Naive thymus-derived CD8-positive, alpha-beta T cell (primary cell): ENCODE measurements at regions of chr17 and their contacts with region 1.

Region 1: DNA sequence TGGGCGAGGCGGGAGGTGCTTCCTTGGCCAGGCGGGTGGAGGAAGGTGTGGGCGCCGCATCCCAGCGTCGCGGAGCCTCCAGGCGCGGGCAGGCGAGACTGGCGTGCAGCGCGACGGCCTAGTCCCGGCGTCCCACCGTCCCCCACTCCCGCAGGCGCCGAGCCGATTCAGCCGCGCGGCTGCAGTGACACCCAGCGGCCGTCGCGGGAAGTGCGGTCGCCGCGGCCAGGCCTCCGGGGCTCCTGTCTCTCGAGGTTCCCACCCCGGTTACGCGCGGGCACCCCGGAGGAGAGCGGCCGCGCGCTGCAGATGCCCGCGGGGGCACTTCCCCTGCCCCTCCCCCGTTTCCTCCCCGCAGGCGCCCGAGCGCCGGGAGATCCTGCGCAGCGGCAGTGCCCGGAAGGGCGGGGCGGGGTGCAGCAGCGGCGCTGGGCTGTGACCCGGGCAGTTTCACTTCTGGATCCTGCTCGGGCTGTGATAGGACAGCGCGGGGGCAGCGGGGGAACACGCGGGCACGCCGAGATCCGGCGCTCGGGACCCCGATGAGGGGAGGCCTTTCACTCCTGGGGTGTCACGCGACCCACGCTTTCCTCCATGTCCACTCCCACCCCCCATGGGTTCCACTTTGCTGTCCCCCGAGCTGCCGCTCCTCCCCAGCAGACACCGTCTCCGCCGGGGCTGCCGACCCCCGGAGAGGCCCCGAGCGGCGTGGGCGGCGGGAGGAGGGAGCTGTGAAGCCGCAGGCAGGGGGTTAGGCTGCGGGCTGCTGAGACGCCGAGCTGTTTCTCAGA is 16.6 kb downstream of the GRB7 start:
- DNase-seq: peak; percentile 94 to 99 (median 98)
- ATAC-seq: peak; percentile 73 to 83
- H3K4me3 Mint-ChIP-seq: peak overlapping the region; percentile 68 to 91 (median 82)
- H3K27ac Mint-ChIP-seq: peak overlapping the region; percentile 19 to 99 (median 96)
- H3K4me1 Mint-ChIP-seq: peaks cover 27 to 61% (median 56%) of the 10 kb centered on the region in 4 donors
- H3K27me3 Mint-ChIP-seq: no peaks in the 10 kb centered on the region

Region 2: GRCh38 chr17:39621523-39622379 is 132.6 kb before region 1 on chr17:
- POLR2A ChIA-PET with region 1: interaction called, 55 read pairs
- DNase-seq: peak; percentile 75 to 98 (median 87)
- ATAC-seq: peak; percentile 54 to 67
- H3K4me3 Mint-ChIP-seq: peak overlapping the region; percentile 26 to 82 (median 51)
- H3K27ac Mint-ChIP-seq: peak overlapping the region in 9 of 10 donors; percentile 5 to 75 (median 57)
- H3K4me1 Mint-ChIP-seq: peaks cover 15 to 41% (median 29%) of the 10 kb centered on the region in 4 donors
- H3K27me3 Mint-ChIP-seq: peaks cover 8 to 25% (median 18%) of the 10 kb centered on the region in 5 donors

Region 3: DNA sequence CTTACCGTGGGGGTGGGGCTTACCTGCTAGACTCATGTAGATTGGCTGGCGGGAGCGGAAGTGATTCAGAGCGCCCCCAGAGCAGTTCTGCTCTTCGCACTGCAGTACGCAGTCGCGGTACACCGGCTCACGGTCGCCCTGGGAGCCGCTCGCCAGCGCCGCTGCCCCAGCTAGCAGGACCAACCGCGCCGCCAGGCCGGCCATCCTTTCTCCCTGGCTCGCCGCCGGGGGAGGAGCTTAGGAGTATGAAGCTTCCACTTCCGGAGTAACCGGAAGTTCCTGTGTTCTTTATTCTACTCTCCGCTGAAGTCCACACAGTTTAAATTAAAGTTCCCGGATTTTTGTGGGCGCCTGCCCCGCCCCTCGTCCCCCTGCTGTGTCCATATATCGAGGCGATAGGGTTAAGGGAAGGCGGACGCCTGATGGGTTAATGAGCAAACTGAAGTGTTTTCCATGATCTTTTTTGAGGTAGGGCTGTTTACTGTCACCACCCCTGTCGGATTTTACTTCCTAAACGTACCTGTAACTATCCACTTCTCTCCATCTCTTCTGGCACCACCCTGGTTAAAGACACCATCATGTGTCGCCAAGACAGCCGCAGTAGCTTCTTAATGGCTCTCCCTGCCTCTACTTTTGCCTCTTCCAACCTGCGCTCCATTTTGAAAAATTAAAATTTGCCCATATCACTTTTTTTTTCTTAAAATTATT is 66.4 kb before region 1 on chr17 and contains the start of gene PGAP3:
- POLR2A ChIA-PET with region 1: interaction called, 13 read pairs
- DNase-seq: peak; percentile 73 to 92 (median 80)
- ATAC-seq: peak; percentile 89 to 93
- H3K4me3 Mint-ChIP-seq: peak within 1 kb of the TSS; percentile 97 to 99 (median 98)
- H3K27ac Mint-ChIP-seq: peak within 1 kb of the TSS; percentile 97 to 99 (median 98)
- H3K4me1 Mint-ChIP-seq: peaks cover 23 to 35% (median 30%) of the 10 kb centered on the region in 4 donors
- H3K27me3 Mint-ChIP-seq: no peaks in the 10 kb centered on the region
- polyA plus RNA-seq, gene PGAP3: 14.2 to 17.7 (median 15.5) TPM

Region 4: GRCh38 chr17:39699818-39700147 is 54.6 kb before region 1 on chr17 and contains the start of gene ERBB2:
- POLR2A ChIA-PET with region 1: no interaction called
- DNase-seq: peak in 1 of 10 donors; percentile 41
- ATAC-seq: no peak
- H3K4me3 Mint-ChIP-seq: peak within 1 kb of the TSS; percentile 8 to 83 (median 65)
- H3K27ac Mint-ChIP-seq: peak within 1 kb of the TSS in 1 of 10 donors; percentile 28
- H3K4me1 Mint-ChIP-seq: peaks cover 12 to 20% (median 13%) of the 10 kb centered on the region in 4 donors
- H3K27me3 Mint-ChIP-seq: peaks cover 22 to 35% (median 23%) of the 10 kb centered on the region in 5 donors
- polyA plus RNA-seq, gene ERBB2: 0.85 to 2.4 (median 1.5) TPM

Region 5: GRCh38 chr17:39719563-39720355 is 34.6 kb before region 1 on chr17:
- POLR2A ChIA-PET with region 1: no interaction called
- DNase-seq: no peak
- ATAC-seq: no peak
- H3K4me3 Mint-ChIP-seq: no peak overlapping the region
- H3K27ac Mint-ChIP-seq: peak overlapping the region in 2 of 10 donors; percentile 3 to 20
- H3K4me1 Mint-ChIP-seq: peaks cover 0 to 3% (median 0%) of the 10 kb centered on the region in 4 donors
- H3K27me3 Mint-ChIP-seq: no peaks in the 10 kb centered on the region

Region 6: GRCh38 chr17:39769974-39770587 is 15.7 kb after region 1 on chr17:
- POLR2A ChIA-PET with region 1: interaction called, 41 read pairs
- DNase-seq: peak in 8 of 10 donors; percentile 48 to 78 (median 67)
- ATAC-seq: peak; percentile 79 to 85
- H3K4me3 Mint-ChIP-seq: peak overlapping the region; percentile 33 to 95 (median 82)
- H3K27ac Mint-ChIP-seq: peak overlapping the region; percentile 86 to 100 (median 96)
- H3K4me1 Mint-ChIP-seq: peaks cover 56 to 100% (median 99%) of the 10 kb centered on the region in 4 donors
- H3K27me3 Mint-ChIP-seq: no peaks in the 10 kb centered on the region

Region 7: DNA sequence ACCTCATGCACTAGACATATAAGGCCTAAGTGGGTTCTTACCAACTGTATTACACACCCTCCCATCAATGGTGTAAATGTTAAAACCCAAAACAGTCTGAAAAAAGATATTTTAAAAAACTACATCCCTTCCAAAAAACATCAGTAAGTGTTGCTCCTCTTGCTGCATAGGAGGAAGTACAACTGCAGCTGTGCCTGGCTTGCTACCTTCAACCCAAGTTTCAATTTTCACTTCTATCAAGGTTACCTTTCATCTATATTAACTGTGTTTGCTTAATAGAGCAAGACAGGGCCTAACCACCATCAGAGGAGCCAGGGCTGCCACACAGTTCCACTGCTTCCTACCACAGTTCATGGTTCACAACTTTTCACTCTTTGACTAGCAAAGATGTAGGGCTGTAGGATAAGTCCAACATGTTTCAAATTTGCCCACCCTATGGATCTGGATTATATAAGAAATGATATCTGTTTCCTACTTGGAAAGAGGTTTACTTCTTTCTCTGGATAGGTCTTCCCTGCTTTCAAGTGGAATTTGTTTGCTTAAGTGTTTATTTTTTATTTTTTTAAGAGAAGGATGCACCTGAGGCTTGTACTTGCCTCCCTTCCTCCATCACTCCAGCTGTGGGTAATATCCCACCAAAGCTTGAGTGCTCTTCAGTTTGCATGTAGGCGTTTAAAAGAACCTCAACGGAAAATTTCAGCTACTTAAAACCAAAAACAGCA is 40.1 kb after region 1 on chr17:
- POLR2A ChIA-PET with region 1: interaction called, 47 read pairs
- DNase-seq: peak in 4 of 10 donors; percentile 32 to 53 (median 42)
- ATAC-seq: peak; percentile 69 to 79
- H3K4me3 Mint-ChIP-seq: peak overlapping the region; percentile 60 to 86 (median 74)
- H3K27ac Mint-ChIP-seq: peak overlapping the region; percentile 84 to 98 (median 94)
- H3K4me1 Mint-ChIP-seq: peaks cover 46 to 87% (median 81%) of the 10 kb centered on the region in 4 donors
- H3K27me3 Mint-ChIP-seq: no peaks in the 10 kb centered on the region

Region 8: DNA sequence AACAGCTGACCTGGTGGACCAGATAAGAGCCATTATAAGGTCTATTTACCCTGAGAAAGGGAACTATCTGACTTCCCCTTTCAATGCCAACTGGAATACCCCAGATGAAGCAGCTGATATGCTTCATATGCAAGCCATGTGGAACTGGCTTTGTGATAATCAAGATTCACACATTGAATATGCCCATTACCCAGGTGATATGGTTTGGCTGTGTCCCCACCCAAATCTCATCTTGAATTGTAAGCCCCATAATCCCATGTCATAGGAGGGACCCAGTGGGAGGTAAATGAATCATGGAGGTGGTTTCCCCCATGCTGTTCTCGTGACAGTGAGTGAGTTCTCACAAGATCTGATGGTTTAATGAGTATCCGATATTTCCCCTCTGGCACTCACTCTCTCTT is 67.7 kb after region 1 on chr17:
- POLR2A ChIA-PET with region 1: interaction called, 47 read pairs
- DNase-seq: no peak
- ATAC-seq: no peak
- H3K4me3 Mint-ChIP-seq: peak overlapping the region in 1 of 10 donors; percentile 15
- H3K27ac Mint-ChIP-seq: peak overlapping the region; percentile 88 to 97 (median 94)
- H3K4me1 Mint-ChIP-seq: peaks cover 21 to 57% (median 56%) of the 10 kb centered on the region in 4 donors
- H3K27me3 Mint-ChIP-seq: no peaks in the 10 kb centered on the region

Region 9: GRCh38 chr17:39894681-39895376 is 140.5 kb after region 1 on chr17:
- POLR2A ChIA-PET with region 1: no interaction called
- DNase-seq: no peak
- ATAC-seq: no peak
- H3K4me3 Mint-ChIP-seq: peak overlapping the region in 1 of 10 donors; percentile 17
- H3K27ac Mint-ChIP-seq: peak overlapping the region in 6 of 10 donors; percentile 35 to 79 (median 56)
- H3K4me1 Mint-ChIP-seq: peaks cover 6 to 12% (median 7%) of the 10 kb centered on the region in 4 donors
- H3K27me3 Mint-ChIP-seq: no peaks in the 10 kb centered on the region

Region 10: GRCh38 chr17:39927101-39927928 is 173.0 kb after region 1 on chr17 and contains the starts of genes LRRC3C and ORMDL3:
- POLR2A ChIA-PET with region 1: interaction called, 40 read pairs
- DNase-seq: peak; percentile 85 to 93 (median 90)
- ATAC-seq: peak; percentile 69 to 72
- H3K4me3 Mint-ChIP-seq: peak within 1 kb of the TSS; percentile 87 to 99 (median 92)
- H3K27ac Mint-ChIP-seq: peak within 1 kb of the TSS; percentile 93 to 98 (median 96)
- H3K4me1 Mint-ChIP-seq: peaks cover 24 to 55% (median 50%) of the 10 kb centered on the region in 4 donors
- H3K27me3 Mint-ChIP-seq: no peaks in the 10 kb centered on the region
- polyA plus RNA-seq, gene LRRC3C: not detected
- polyA plus RNA-seq, gene ORMDL3: 100 to 335 (median 249) TPM